OCI-LY7 (cell line): ENCODE measurements at regions of chr2 and their contacts with region 1.

Region 1: GRCh38 chr2:239871481-239872435 is 153.4 kb downstream of the NDUFA10 start:
- DNase-seq: no peak
- H3K4me3 ChIP-seq: no peak overlapping the region
- H3K27ac ChIP-seq: no peak overlapping the region
- H3K4me1 ChIP-seq: no peaks in the 10 kb centered on the region
- CTCF ChIP-seq: no peak

Region 2: GRCh38 chr2:240033330-240033678 is 161.5 kb after region 1 on chr2:
- CTCF ChIA-PET with region 1: interaction called, 11 read pairs
- POLR2A ChIA-PET with region 1: no interaction called
- intact Hi-C with region 1: no loop called
- DNase-seq: no peak
- H3K4me3 ChIP-seq: no peak overlapping the region
- H3K27ac ChIP-seq: no peak overlapping the region
- H3K4me1 ChIP-seq: no peaks in the 10 kb centered on the region
- CTCF ChIP-seq: no peak